OCI-LY7 (cell line): ENCODE measurements at regions of chr17 and their contacts with region 1.

Region 1: GRCh38 chr17:13594762-13595598 is 6.7 kb downstream of the HS3ST3A1 start:
- DNase-seq: peak; percentile 81
- H3K4me3 ChIP-seq: no peak overlapping the region
- H3K27ac ChIP-seq: no peak overlapping the region
- H3K4me1 ChIP-seq: peaks cover 10% of the 10 kb centered on the region
- CTCF ChIP-seq: peak; percentile 98

Region 2: DNA sequence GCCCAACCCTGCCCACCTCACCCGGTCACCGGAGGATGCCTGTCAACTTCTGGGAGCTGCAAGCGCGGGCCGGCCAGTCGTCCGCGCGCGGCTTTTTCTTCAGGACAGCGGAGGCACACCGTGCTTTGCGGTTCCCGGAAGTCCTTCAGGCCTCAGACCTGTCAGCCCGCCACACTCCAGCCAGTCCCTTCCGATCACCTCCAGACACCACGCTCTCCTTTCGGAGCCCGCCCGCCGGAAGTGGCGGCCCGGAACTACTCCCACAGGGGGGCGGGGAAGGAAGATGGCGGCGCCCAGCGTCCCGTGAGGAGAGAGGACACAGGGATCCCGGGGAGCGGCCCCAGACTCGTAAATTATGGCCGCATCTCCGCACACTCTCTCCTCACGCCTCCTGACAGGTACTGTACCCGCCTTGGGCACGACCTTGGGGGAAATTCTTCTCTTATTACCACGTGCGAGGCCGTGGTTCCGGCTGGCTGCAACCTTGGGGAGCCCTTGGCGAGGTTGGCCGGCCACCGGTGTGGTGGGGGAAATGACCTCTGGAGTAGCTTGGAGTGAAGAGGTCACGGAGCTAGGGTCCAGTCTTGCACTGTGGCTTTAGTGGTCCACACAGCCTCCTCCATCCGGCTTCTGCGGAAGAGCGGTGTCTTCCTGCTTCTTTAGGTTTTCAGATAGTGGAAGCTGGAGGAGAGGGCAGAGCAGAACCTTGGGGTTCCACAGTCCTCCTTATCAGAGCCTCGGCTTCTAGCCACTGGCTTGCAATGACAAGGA is 474.5 kb after region 1 on chr17 and contains the start of gene COX10:
- CTCF ChIA-PET with region 1: no interaction called
- POLR2A ChIA-PET with region 1: no interaction called
- intact Hi-C with region 1: loop called (anchors 10 kb)
- DNase-seq: peak; percentile 90
- H3K4me3 ChIP-seq: peak within 1 kb of the TSS; percentile 99
- H3K27ac ChIP-seq: peak within 1 kb of the TSS; percentile 55
- H3K4me1 ChIP-seq: peaks cover 21% of the 10 kb centered on the region
- CTCF ChIP-seq: no peak
- total RNA-seq, gene COX10: 21.1 and 28.4 TPM in 2 replicates

Region 3: GRCh38 chr17:14926526-14927122 is 1331.6 kb after region 1 on chr17:
- CTCF ChIA-PET with region 1: no interaction called
- POLR2A ChIA-PET with region 1: no interaction called
- intact Hi-C with region 1: loop called (anchors 5 kb)
- DNase-seq: peak; percentile 81
- H3K4me3 ChIP-seq: no peak overlapping the region
- H3K27ac ChIP-seq: no peak overlapping the region
- H3K4me1 ChIP-seq: peaks cover 8% of the 10 kb centered on the region
- CTCF ChIP-seq: peak; percentile 95